Activated CD4-positive, alpha-beta memory T cell treated with anti-CD3 and anti-CD28 coated beads for 36 hours (primary cell): ENCODE measurements at regions of chr13 and their contacts with region 1.

Region 1: GRCh38 chr13:43023289-43023951 is at the start of gene DNAJC15:
- DNase-seq: peak; percentile 89
- H3K4me3 Mint-ChIP-seq: peak within 1 kb of the TSS; percentile 97
- H3K27ac Mint-ChIP-seq: peak within 1 kb of the TSS; percentile 93
- H3K4me1 Mint-ChIP-seq: peaks cover 30% of the 10 kb centered on the region
- H3K27me3 Mint-ChIP-seq: no peaks in the 10 kb centered on the region
- total RNA-seq, gene DNAJC15: 16.4 to 17.4 TPM

Region 2: GRCh38 chr13:43006893-43007631 is 16.4 kb before region 1 on chr13:
- CTCF ChIA-PET with region 1: no interaction called
- POLR2A ChIA-PET with region 1: no interaction called
- intact Hi-C with region 1: no loop called
- DNase-seq: no peak
- H3K4me3 Mint-ChIP-seq: no peak overlapping the region
- H3K27ac Mint-ChIP-seq: no peak overlapping the region
- H3K4me1 Mint-ChIP-seq: no peaks in the 10 kb centered on the region
- H3K27me3 Mint-ChIP-seq: peaks cover 4% of the 10 kb centered on the region

Region 3: GRCh38 chr13:43054803-43055802 is 31.7 kb after region 1 on chr13:
- CTCF ChIA-PET with region 1: interaction called, 4 read pairs
- POLR2A ChIA-PET with region 1: no interaction called
- intact Hi-C with region 1: loop called (anchors 1 kb)
- DNase-seq: peak; percentile 25
- H3K4me3 Mint-ChIP-seq: no peak overlapping the region
- H3K27ac Mint-ChIP-seq: no peak overlapping the region
- H3K4me1 Mint-ChIP-seq: peaks cover 29% of the 10 kb centered on the region
- H3K27me3 Mint-ChIP-seq: no peaks in the 10 kb centered on the region